GM10248 (cell line): ENCODE measurements at regions of chr19 and their contacts with region 1.

Region 1: GRCh38 chr19:2236314-2237050 is at the starts of genes PLEKHJ1 and SF3A2:
- DNase-seq: peak; percentile 99
- CTCF ChIP-seq: peak; percentile 99

Region 2: DNA sequence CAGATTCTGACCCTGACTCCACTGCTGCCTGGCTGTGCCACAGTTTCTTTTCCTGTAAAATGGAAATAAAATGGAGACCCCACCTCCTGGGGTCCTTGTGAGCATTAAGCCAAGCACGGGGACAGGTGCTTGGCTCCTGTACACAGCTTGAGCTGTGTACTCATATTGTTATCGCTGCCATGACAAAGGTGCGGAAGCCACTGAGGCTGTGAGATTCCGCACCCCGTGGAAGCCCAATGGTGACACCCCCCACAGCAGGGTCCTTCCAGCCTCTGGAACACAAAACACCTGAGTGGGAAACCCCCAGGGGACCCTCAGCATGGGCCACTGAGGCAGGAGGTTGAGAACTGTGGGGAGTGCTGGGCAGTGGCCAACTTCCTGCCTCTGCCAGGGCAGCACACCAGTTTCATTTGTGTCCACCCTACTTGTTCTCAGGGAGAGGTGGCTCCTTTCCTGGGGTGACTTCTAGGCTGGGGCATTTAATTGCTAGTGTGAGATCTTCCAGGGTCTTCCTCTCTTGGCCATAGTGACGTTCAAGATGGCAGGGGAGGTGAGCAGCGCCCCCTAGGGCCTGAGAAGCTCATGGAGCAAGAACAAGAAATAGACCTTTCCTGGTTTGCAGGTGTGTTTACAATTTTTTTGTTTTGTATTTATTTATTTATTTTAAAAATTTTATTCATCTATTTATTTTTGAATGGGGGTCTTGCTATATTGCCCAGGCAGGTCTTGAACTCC is 25.1 kb after region 1 on chr19:
- CTCF ChIA-PET with region 1: interaction called, 14 read pairs
- POLR2A ChIA-PET with region 1: no interaction called
- DNase-seq: no peak
- CTCF ChIP-seq: peak; percentile 53